AG04449 (cell line): ENCODE measurements at regions of chr17 and their contacts with region 1.

Region 1: GRCh38 chr17:76278952-76279741 is 14.0 kb downstream of the UBALD2 start:
- DNase-seq: peak; percentile 14
- H3K4me3 ChIP-seq: no peak overlapping the region
- CTCF ChIP-seq: peak; percentile 94

Region 2: GRCh38 chr17:76000016-76000754 is 279.0 kb before region 1 on chr17:
- CTCF ChIA-PET with region 1: interaction called, 12 read pairs
- POLR2A ChIA-PET with region 1: no interaction called
- DNase-seq: no peak
- H3K4me3 ChIP-seq: no peak overlapping the region
- CTCF ChIP-seq: peak; percentile 84

Region 3: DNA sequence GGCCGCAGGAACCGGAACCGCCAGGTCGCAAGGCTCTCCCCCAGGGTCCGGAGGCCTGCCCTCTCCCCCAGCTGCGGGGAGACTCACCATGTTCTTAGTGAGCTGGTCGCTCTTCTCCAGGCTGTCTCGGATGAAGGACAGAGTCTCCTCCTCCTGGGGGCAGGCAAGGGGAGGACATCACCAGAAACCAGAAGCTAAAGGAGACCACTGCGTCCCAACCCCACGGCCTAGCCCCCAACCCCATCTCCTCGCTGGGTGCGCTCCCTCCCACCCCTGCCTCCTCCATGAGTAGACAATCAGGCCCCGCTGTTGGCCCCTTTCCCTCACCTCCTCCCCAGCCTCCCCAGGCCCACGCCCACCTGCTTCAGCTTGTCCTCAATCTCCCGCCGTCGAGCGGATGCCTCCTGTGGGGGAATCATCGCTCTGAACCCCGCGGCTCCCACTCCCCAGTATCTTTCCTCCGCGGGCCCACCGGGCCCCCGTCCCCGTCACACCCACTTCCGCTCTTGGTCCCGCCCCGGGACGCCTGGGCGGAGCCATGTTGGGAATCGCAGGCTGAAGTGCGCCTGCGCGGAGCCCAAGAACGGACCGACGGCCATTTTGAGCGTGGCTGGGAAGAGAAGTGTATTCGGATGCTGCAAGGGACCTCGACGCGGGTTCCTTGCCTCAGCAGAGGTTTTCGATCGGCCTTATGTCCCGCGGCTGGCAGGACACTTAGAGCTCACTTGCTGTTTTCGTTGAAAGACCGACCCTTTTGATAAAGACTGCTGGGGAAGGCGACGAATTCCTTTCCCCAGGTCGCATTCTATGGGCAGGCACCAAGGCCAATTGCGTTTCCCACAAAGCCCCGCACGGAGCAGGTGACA is 175.6 kb before region 1 on chr17 and contains the start of gene EXOC7:
- CTCF ChIA-PET with region 1: interaction called, 23 read pairs
- POLR2A ChIA-PET with region 1: no interaction called
- DNase-seq: peak; percentile 16
- H3K4me3 ChIP-seq: peak within 1 kb of the TSS; percentile 92
- CTCF ChIP-seq: peak; percentile 10

Region 4: DNA sequence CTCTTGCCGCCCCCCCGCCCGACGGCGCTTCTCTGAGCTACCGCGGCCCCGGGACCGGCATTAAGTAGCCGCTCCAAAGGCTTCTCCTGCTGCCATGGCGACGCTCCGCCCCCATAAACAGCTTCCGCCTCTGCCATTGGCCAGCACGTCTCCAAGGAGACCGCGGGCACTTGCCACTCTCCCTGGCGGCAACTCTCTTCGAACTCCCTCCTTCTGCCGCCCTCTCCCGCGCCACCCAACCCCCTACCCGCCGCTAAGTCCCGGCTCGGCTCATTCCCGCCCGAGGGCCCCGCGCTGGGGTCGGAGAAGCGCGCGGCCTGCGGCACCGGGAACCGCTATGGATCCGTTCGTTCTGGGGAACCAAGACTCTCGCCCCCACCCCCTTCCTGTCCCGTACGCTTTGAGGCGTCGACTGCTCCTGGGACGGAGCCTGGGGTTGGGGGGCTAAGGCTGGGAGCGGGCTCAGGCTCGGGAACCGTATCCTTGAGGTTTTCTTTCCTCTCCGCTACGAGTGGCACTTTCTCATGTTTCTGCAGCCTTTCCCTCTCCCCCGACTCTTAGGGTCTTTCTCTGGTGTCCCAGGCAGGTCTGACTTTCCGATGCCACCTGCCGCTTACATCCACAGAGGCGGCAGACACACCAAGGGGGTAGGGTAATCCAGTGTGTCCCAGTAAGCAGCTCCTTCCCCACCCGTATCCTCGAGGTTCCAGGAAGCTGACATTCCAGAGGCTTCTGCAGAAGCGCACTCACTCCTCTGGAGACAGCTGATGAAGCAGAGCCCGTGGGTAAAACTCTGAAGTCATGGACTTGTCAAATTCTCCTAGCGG is 137.7 kb before region 1 on chr17 and contains the start of gene FOXJ1:
- CTCF ChIA-PET with region 1: interaction called, 16 read pairs
- POLR2A ChIA-PET with region 1: no interaction called
- DNase-seq: peak; percentile 2
- H3K4me3 ChIP-seq: peak within 1 kb of the TSS; percentile 57
- CTCF ChIP-seq: no peak

Region 5: GRCh38 chr17:76182016-76182764 is 97.0 kb before region 1 on chr17:
- CTCF ChIA-PET with region 1: interaction called, 32 read pairs
- POLR2A ChIA-PET with region 1: no interaction called
- DNase-seq: peak; percentile 14
- H3K4me3 ChIP-seq: no peak overlapping the region
- CTCF ChIP-seq: peak; percentile 91

Region 6: DNA sequence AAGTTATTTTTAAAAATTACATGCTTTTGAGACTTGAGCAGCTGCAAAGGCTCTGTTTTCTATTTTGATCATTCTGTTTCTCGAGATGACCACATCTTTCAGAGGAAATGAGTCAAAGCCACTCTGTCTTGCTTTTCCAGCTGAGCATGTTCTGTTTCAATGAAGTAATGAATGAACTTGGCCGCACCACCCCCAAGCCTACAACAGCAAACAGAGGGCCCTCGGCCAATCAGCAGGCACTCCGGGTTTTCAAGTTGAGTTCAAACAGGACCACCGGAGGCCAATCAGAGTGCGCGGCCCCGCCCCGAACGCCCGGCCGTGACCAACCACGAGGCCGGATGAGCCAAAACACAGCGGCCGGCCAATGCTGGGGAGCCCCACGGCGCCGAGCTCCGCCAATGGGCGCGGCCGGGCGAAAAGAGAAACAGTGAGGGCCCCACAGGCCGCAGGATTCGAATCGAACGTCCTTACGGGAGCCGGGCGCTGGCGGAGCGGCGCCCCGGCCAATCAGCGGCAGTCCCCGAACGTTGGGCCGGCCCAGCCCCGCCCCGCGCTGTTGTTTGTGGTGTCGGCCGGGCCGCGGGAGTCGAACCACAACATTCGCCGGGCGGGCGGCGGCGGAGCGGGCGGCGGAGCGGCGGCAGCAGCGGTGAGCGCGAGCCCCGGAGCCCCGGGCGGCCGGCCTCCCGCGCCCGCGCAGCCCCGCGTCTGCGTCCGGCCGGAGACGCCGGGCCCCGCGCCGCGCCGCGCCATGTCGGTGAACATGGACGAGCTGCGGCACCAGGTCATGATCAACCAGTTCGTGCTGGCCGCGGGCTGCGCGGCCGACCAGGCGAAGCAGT is 14.2 kb before region 1 on chr17 and contains the start of gene UBALD2:
- CTCF ChIA-PET with region 1: interaction called, 109 read pairs
- POLR2A ChIA-PET with region 1: interaction called, 3 read pairs
- DNase-seq: peak; percentile 100
- H3K4me3 ChIP-seq: peak within 1 kb of the TSS; percentile 79
- CTCF ChIP-seq: no peak